SK-N-SH (cell line): ENCODE measurements at regions of chr7 and their contacts with region 1.

Region 1: GRCh38 chr7:142535123-142535779 is 214.0 kb upstream of the PRSS1 start:
- DNase-seq: peak; percentile 80
- H3K4me3 ChIP-seq: peak overlapping the region; percentile 2 to 10; a peak in 3 of 4 replicates
- H3K27ac ChIP-seq: peak overlapping the region; percentile 14 to 99; a peak in 3 of 4 replicates
- H3K4me1 ChIP-seq: peaks cover 12 to 28% of the 10 kb centered on the region in 2 experiments; a peak in 3 of 4 replicates
- H3K27me3 ChIP-seq: no peaks in the 10 kb centered on the region
- CTCF ChIP-seq: peak; percentile 100
- EP300 ChIP-seq: peak; percentile 95 to 99
- RAD21 ChIP-seq: peak; percentile 100

Region 2: GRCh38 chr7:142033154-142033553 is 502.1 kb before region 1 on chr7:
- CTCF ChIA-PET with region 1: no interaction called
- POLR2A ChIA-PET with region 1: no interaction called
- DNase-seq: no peak
- H3K4me3 ChIP-seq: no peak overlapping the region
- H3K27ac ChIP-seq: no peak overlapping the region
- H3K4me1 ChIP-seq: no peaks in the 10 kb centered on the region
- H3K27me3 ChIP-seq: no peaks in the 10 kb centered on the region
- CTCF ChIP-seq: no peak
- EP300 ChIP-seq: no peak
- RAD21 ChIP-seq: no peak

Region 3: GRCh38 chr7:142352543-142352942 is 182.7 kb before region 1 on chr7:
- CTCF ChIA-PET with region 1: no interaction called
- POLR2A ChIA-PET with region 1: no interaction called
- DNase-seq: no peak
- H3K4me3 ChIP-seq: no peak overlapping the region
- H3K27ac ChIP-seq: no peak overlapping the region
- H3K4me1 ChIP-seq: no peaks in the 10 kb centered on the region
- H3K27me3 ChIP-seq: peaks cover 63% of the 10 kb centered on the region
- CTCF ChIP-seq: no peak
- EP300 ChIP-seq: no peak
- RAD21 ChIP-seq: no peak

Region 4: GRCh38 chr7:142496545-142497041 is 38.7 kb before region 1 on chr7:
- CTCF ChIA-PET with region 1: interaction called, 56 read pairs
- POLR2A ChIA-PET with region 1: no interaction called
- DNase-seq: peak; percentile 67
- H3K4me3 ChIP-seq: no peak overlapping the region
- H3K27ac ChIP-seq: no peak overlapping the region
- H3K4me1 ChIP-seq: peaks cover 0 to 3% of the 10 kb centered on the region in 2 experiments; a peak in 1 of 4 replicates
- H3K27me3 ChIP-seq: peaks cover 21% of the 10 kb centered on the region; the same call in 1 of the 2 replicates
- CTCF ChIP-seq: peak; percentile 95
- EP300 ChIP-seq: no peak
- RAD21 ChIP-seq: peak; percentile 69

Region 5: DNA sequence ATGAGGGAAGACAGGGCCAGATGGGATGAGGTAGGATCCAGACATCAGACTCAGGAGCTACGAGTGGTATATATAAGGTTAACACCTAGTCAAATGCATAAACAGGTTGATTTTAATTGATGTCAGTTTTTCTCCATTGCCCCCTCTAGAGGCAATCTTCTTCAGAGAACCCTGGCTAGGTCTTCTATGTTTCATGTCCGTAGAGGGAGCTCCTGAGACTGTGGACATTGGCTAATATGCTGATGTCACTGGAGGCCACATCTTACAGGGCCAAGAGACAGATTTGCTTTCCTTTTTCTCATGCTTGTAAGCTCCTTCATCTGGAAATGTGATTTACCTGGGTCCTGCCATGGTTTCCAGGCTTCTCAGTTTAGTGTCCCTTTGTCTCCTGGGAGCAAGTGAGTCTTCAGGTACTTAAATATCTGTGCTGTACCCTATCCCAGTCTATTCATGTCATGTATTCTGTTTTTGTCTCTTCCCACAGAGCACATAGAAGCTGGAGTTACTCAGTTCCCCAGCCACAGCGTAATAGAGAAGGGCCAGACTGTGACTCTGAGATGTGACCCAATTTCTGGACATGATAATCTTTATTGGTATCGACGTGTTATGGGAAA is 52.4 kb after region 1 on chr7:
- CTCF ChIA-PET with region 1: interaction called, 63 read pairs
- POLR2A ChIA-PET with region 1: no interaction called
- DNase-seq: peak; percentile 31
- H3K4me3 ChIP-seq: no peak overlapping the region; a peak in 1 of 4 replicates
- H3K27ac ChIP-seq: no peak overlapping the region
- H3K4me1 ChIP-seq: peaks cover 0 to 6% of the 10 kb centered on the region in 2 experiments; a peak in 3 of 4 replicates
- H3K27me3 ChIP-seq: no peaks in the 10 kb centered on the region
- CTCF ChIP-seq: peak; percentile 64
- EP300 ChIP-seq: no peak
- RAD21 ChIP-seq: peak; percentile 40; the same call in 1 of the 2 replicates

Region 6: DNA sequence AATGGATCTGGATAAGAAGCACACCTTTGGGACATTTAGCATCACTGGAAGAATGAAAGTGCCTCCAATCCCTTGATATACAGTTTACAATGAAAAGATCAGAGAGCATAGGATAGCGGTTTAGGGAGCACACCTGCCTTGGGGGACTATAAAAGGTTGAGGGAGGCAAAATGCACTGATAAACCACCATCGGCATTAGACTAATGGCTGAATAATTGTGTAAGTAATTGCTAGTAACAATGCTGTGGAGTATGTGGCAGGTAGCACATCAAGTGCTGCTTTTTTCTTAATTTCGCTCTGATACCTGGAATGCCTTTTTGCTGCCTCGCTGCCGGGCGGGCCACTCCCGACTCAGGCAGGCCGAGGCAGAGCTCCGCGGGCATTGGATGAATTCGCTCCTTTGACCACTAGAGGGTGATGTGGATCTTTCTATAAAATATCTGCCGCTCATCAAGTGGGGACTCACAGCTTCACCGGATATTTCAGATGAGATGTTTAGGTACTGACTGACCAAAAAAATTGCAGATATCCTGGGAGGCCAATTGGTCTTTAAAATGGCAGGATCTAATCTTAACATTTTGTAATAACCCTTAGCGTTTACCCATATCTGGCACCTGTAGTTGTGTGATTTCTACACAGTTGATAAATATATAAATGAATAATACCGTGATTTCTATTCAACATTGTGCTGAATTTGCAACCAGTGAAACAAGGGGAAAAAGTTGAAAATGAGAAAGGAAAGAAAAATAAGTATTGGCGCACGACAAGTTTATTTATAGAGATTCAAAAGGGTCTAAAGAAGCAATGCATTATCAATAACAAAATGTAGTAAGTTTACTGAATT is 97.3 kb after region 1 on chr7:
- CTCF ChIA-PET with region 1: interaction called, 148 read pairs
- POLR2A ChIA-PET with region 1: no interaction called
- DNase-seq: peak; percentile 87
- H3K4me3 ChIP-seq: no peak overlapping the region
- H3K27ac ChIP-seq: peak overlapping the region in 1 of 2 experiments; percentile 11; a peak in 1 of 4 replicates
- H3K4me1 ChIP-seq: no peaks in the 10 kb centered on the region; a peak in 2 of 4 replicates
- H3K27me3 ChIP-seq: peaks cover 14% of the 10 kb centered on the region; the same call in 1 of the 2 replicates
- CTCF ChIP-seq: peak; percentile 93
- EP300 ChIP-seq: no peak
- RAD21 ChIP-seq: peak; percentile 96

Region 7: GRCh38 chr7:142771353-142771723 is 236.1 kb after region 1 on chr7:
- CTCF ChIA-PET with region 1: interaction called, 14 read pairs
- POLR2A ChIA-PET with region 1: no interaction called
- DNase-seq: no peak
- H3K4me3 ChIP-seq: no peak overlapping the region
- H3K27ac ChIP-seq: no peak overlapping the region
- H3K4me1 ChIP-seq: no peaks in the 10 kb centered on the region
- H3K27me3 ChIP-seq: peaks cover 41% of the 10 kb centered on the region
- CTCF ChIP-seq: no peak
- EP300 ChIP-seq: no peak
- RAD21 ChIP-seq: no peak

Region 8: GRCh38 chr7:143008007-143008901 is 473.0 kb after region 1 on chr7:
- CTCF ChIA-PET with region 1: interaction called, 29 read pairs
- POLR2A ChIA-PET with region 1: no interaction called
- DNase-seq: peak; percentile 78
- H3K4me3 ChIP-seq: no peak overlapping the region; a peak in 1 of 4 replicates
- H3K27ac ChIP-seq: no peak overlapping the region
- H3K4me1 ChIP-seq: 0 out of 4 replicates have a peak, but pooled peaks cover 0 to under 1% of the 10 kb centered on the region in 2 experiments
- H3K27me3 ChIP-seq: no peaks in the 10 kb centered on the region; the same call in 1 of the 2 replicates
- CTCF ChIP-seq: peak; percentile 100
- EP300 ChIP-seq: no peak
- RAD21 ChIP-seq: peak; percentile 96

Region 9: DNA sequence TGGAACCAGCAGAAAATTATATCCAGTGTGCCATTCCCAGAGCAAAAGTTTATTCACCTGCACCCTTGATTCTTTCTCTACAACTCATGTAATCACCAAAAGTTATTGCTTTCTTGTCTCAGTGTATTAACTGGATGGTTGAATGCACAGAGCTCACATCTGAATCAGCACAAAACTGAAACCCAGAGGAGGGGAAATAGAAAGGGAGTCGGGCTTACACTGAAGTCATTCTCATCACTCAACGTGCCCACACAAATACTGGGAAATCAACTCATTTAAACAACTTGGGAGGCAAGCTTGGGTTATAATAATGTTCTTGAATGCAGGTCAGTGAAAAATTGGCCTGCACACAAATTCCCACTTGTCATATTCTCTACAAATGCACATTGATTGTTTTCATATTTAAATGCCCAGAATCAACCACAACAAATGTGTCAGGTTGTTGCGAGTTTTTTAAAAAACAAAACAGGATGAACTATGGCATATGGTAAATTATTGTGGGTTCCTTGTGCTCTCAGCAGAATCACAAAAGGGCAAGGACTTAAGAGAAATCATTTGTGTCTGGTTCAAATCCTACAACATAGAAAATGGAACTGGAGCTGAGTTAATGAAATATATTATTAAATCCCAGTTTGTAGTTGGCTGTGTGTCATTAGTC is 1994.1 kb after region 1 on chr7:
- CTCF ChIA-PET with region 1: no interaction called
- POLR2A ChIA-PET with region 1: no interaction called
- DNase-seq: no peak
- H3K4me3 ChIP-seq: no peak overlapping the region
- H3K27ac ChIP-seq: no peak overlapping the region
- H3K4me1 ChIP-seq: no peaks in the 10 kb centered on the region
- H3K27me3 ChIP-seq: no peaks in the 10 kb centered on the region
- CTCF ChIP-seq: no peak
- EP300 ChIP-seq: no peak
- RAD21 ChIP-seq: no peak